ENCODE measurements at regions of chr4 and their contacts with region 1.

Region 1: DNA sequence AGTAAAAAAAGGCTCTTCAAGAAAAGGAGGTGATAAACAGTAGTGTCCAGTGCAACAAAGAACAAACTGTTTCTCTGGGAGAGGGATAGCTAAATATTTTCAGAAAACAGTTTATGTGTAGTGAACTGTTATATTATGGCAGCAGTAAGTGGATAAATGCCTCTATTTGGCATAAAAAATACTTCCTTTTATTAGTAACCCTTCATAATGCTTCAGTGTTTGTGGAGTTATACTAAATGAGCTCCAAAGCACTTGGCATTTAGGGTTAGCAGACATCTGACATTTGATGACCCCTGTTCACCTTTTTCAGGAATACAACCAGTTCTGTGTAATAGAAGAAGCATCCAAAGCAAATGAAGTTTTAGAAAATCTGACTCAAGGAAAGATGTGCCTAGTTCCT is 31.9 kb downstream of the TRAPPC11 start:
- DNase-seq: no peak
- H3K4me3 ChIP-seq: no peak overlapping the region
- H3K27ac ChIP-seq: no peak overlapping the region
- H3K4me1 ChIP-seq: no peaks in the 10 kb centered on the region
- H3K27me3 ChIP-seq: no peaks in the 10 kb centered on the region
- CTCF ChIP-seq: no peak

Region 2: DNA sequence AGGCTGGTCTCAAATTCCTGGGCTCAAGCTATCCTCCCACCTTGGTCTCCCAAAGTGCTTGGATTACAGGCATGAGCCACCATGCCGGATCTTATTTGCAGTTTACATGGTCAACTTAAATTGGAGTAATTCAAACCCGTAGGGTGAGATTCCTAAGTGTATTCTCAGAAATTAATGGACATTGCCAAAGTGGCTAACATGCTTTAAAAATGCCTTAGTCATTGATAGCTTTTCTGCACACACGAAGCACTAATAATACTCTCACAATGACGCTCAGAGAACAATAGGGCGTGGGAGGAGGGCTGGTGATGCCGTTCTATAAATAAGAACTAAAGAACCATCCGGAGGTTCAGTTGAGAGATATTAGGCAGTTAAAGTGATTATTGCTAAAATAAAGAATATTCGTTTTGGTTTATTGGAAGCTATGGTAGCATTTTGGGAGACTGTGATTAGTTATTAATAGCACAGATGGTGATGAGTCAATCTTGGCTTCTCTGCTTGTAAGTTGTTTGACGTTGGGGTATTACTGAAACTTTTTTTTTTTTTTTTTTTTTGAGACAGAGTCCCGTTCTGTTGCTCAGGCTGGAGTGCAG is 47.2 kb after region 1 on chr4:
- CTCF ChIA-PET with region 1: no interaction called
- dilution Hi-C with region 1: no loop called
- in situ Hi-C with region 1: no loop called
- intact Hi-C with region 1: no loop called
- DNase-seq: peak; percentile 92
- H3K4me3 ChIP-seq: peak overlapping the region in 2 of 3 experiments; percentile 9 to 38
- H3K27ac ChIP-seq: peak overlapping the region; percentile 92
- H3K4me1 ChIP-seq: peaks cover 15% of the 10 kb centered on the region
- H3K27me3 ChIP-seq: no peaks in the 10 kb centered on the region
- CTCF ChIP-seq: no peak

Region 3: GRCh38 chr4:183758061-183758757 is 67.2 kb after region 1 on chr4:
- CTCF ChIA-PET with region 1: no interaction called
- dilution Hi-C with region 1: loop called (anchors 10 kb)
- in situ Hi-C with region 1: no loop called
- intact Hi-C with region 1: no loop called
- DNase-seq: no peak
- H3K4me3 ChIP-seq: no peak overlapping the region
- H3K27ac ChIP-seq: no peak overlapping the region
- H3K4me1 ChIP-seq: peaks cover 3% of the 10 kb centered on the region
- H3K27me3 ChIP-seq: peaks cover 3% of the 10 kb centered on the region
- CTCF ChIP-seq: peak in 1 of 2 donors; percentile 6

Measured in mammary epithelial cell (primary cell).